ENCODE measurements at regions of chr1 and their contacts with region 1.

Region 1: DNA sequence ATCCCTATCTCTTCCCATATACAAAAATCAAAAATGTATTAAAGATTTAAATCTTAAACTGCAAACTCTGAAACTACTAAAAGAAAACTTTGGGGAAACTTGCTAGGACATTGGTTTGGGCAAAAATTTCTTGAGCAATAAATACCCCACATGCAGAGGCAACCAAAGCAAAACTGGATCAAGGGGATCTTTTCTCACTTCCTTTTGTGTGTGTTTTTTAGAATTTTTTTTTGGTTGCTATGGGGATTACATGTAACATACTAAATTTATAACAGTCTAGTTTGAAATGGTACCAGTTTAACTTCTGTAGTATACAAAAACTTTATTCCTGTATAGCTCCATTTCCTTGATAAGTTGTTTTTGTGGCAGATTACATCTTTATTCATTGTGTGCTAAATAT is 16.8 kb downstream of the MAST2 start:
- DNase-seq: peak in 2 of 9 donors; percentile 4
- ATAC-seq: no peak
- H3K4me3 ChIP-seq: no peak overlapping the region
- H3K4me3 Mint-ChIP-seq: no peak overlapping the region
- H3K27ac ChIP-seq: no peak overlapping the region
- H3K27ac Mint-ChIP-seq: no peak overlapping the region
- H3K4me1 ChIP-seq: no peaks in the 10 kb centered on the region
- H3K4me1 Mint-ChIP-seq: peaks cover 5 to 14% (median 10%) of the 10 kb centered on the region in 7 donors
- H3K27me3 ChIP-seq: no peaks in the 10 kb centered on the region
- H3K27me3 Mint-ChIP-seq: no peaks in the 10 kb centered on the region

Region 2: DNA sequence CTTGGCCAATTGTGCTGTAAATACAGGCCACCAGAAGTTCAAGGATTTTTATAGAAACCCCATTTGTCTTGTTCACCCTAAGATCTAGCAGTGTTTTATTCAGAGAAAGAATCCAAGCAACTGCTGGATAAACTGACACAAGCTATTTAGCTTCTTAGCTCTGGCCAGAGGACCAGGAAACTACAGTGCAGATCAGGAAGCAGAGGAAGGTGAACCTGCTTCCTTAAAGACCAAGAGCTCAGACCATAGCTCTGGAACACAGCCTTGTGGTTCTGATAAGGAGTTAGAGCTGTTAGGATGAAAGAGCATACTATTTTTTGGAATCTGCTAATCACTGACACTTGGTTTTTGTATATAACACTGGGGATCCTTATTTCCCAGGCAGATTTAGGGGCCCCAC is 191.1 kb before region 1 on chr1:
- CTCF ChIA-PET with region 1: no interaction called
- POLR2A ChIA-PET with region 1: no interaction called
- intact Hi-C with region 1: no loop called
- DNase-seq: no peak
- ATAC-seq: no peak
- H3K4me3 ChIP-seq: no peak overlapping the region
- H3K4me3 Mint-ChIP-seq: no peak overlapping the region
- H3K27ac ChIP-seq: no peak overlapping the region
- H3K27ac Mint-ChIP-seq: peak overlapping the region in 1 of 9 donors; percentile 55
- H3K4me1 ChIP-seq: no peaks in the 10 kb centered on the region
- H3K4me1 Mint-ChIP-seq: no peaks in the 10 kb centered on the region
- H3K27me3 ChIP-seq: no peaks in the 10 kb centered on the region
- H3K27me3 Mint-ChIP-seq: no peaks in the 10 kb centered on the region

Region 3: GRCh38 chr1:45843474-45843905 is 23.3 kb after region 1 on chr1:
- CTCF ChIA-PET with region 1: no interaction called
- POLR2A ChIA-PET with region 1: no interaction called
- intact Hi-C with region 1: loop called in 1 of 2 experiments (anchors 2 kb)
- DNase-seq: peak in 1 of 9 donors; percentile 2
- ATAC-seq: no peak
- H3K4me3 ChIP-seq: no peak overlapping the region
- H3K4me3 Mint-ChIP-seq: peak overlapping the region in 1 of 10 donors; percentile 60
- H3K27ac ChIP-seq: no peak overlapping the region
- H3K27ac Mint-ChIP-seq: peak overlapping the region in 1 of 9 donors; percentile 72
- H3K4me1 ChIP-seq: no peaks in the 10 kb centered on the region
- H3K4me1 Mint-ChIP-seq: peaks cover 0 to 14% (median 5%) of the 10 kb centered on the region in 7 donors
- H3K27me3 ChIP-seq: no peaks in the 10 kb centered on the region
- H3K27me3 Mint-ChIP-seq: no peaks in the 10 kb centered on the region

Measured in naive thymus-derived CD4-positive, alpha-beta T cell (primary cell).